ENCODE measurements at regions of chr2 and their contacts with region 1.

Region 1: DNA sequence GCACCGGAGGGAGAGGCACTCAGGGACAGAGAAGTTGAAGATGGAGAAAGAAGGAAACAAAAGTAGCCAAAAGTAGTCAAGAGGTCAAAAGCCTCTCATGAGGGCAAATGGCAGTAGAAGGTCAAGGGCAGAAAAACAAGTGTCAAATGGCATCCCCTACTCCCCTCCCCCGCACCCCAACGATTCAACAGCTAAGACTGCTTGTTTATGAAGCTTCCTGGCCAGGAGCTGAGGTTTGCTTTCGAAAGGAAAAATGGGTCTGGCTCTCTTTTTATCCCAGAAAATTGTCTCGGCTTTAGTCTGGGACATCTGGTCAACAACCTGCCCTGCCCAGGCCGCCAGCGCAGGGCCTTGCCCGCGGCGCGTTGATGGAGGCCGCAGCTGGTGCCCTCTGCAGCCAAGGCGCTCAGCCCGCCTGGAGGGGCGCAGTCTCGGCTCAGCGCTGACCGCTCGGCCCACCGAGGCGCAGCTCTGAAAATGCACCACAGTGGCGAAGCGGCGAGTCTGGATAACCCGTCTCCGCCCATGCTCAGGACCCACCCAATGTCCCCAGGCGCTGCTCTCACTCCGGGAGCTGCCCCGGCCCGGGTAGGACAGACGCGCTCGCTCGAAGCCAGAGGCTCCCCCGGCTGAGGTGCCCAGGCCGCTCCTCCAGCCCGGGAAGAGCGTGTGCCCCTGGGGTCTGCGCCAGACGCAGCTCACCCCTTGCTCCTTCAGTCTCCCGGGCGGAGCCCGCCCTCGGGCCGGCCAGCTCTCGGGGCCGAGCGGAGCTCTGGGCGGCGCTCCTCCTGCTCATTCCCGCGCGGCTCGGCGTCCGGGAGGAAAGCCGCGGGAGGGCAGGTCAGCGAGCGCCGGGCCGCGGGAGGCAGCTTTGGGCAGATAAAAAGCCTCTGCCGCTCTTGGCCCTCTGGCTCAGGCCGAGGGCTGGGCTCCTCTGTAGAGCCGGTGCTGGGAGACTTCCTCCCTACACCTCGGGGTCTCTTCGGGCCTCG is 1.8 kb upstream of the TBR1 start:
- DNase-seq: peak; percentile 25
- ATAC-seq: peak; percentile 45
- H3K4me3 Mint-ChIP-seq: peak overlapping the region; percentile 52
- H3K27ac Mint-ChIP-seq: no peak overlapping the region
- H3K4me1 Mint-ChIP-seq: peaks cover 42% of the 10 kb centered on the region
- H3K27me3 Mint-ChIP-seq: peaks cover 48% of the 10 kb centered on the region

Region 2: DNA sequence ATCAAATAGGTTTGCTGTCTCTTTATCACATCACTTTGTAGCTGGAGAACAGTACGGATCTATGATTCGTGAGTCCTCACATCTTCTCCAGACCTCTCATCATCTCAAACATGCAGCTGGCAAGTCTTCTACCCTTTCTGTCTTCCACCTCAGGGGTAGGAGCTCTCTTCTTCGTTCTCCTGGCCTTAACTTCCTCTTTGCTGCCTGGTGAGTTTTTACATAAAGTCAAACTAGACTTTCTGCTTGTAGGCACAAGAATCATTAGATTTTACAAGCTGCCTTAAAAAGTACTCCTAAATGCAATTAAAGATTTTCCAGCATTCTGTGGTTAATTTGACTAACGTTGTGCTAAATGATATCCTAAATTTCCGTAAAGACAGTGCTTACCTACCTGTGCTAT is 297.8 kb before region 1 on chr2:
- CTCF ChIA-PET with region 1: no interaction called
- POLR2A ChIA-PET with region 1: no interaction called
- intact Hi-C with region 1: no loop called
- DNase-seq: no peak
- ATAC-seq: no peak
- H3K4me3 Mint-ChIP-seq: no peak overlapping the region
- H3K27ac Mint-ChIP-seq: no peak overlapping the region
- H3K4me1 Mint-ChIP-seq: no peaks in the 10 kb centered on the region
- H3K27me3 Mint-ChIP-seq: peaks cover 2% of the 10 kb centered on the region

Region 3: GRCh38 chr2:161308178-161308955 is 106.0 kb before region 1 on chr2 and contains the start of gene PSMD14:
- CTCF ChIA-PET with region 1: no interaction called
- POLR2A ChIA-PET with region 1: no interaction called
- intact Hi-C with region 1: loop called in 1 of 2 experiments (anchors 5 kb)
- DNase-seq: peak; percentile 96
- ATAC-seq: peak; percentile 91
- H3K4me3 Mint-ChIP-seq: peak within 1 kb of the TSS; percentile 87
- H3K27ac Mint-ChIP-seq: peak within 1 kb of the TSS; percentile 93
- H3K4me1 Mint-ChIP-seq: peaks cover 28% of the 10 kb centered on the region
- H3K27me3 Mint-ChIP-seq: no peaks in the 10 kb centered on the region
- total RNA-seq, gene PSMD14: 69.5 to 85.7 TPM

Region 4: GRCh38 chr2:161426922-161427663 is 12.8 kb after region 1 on chr2:
- CTCF ChIA-PET with region 1: interaction called, 8 read pairs
- POLR2A ChIA-PET with region 1: interaction called, 8 read pairs
- intact Hi-C with region 1: loop called (anchors 1 kb)
- DNase-seq: peak; percentile 51
- ATAC-seq: peak; percentile 30
- H3K4me3 Mint-ChIP-seq: peak overlapping the region; percentile 51
- H3K27ac Mint-ChIP-seq: peak overlapping the region; percentile 67
- H3K4me1 Mint-ChIP-seq: peaks cover 21% of the 10 kb centered on the region
- H3K27me3 Mint-ChIP-seq: peaks cover 72% of the 10 kb centered on the region

Region 5: GRCh38 chr2:161471631-161472030 is 57.3 kb after region 1 on chr2:
- CTCF ChIA-PET with region 1: no interaction called
- POLR2A ChIA-PET with region 1: no interaction called
- intact Hi-C with region 1: no loop called
- DNase-seq: no peak
- ATAC-seq: no peak
- H3K4me3 Mint-ChIP-seq: no peak overlapping the region
- H3K27ac Mint-ChIP-seq: no peak overlapping the region
- H3K4me1 Mint-ChIP-seq: no peaks in the 10 kb centered on the region
- H3K27me3 Mint-ChIP-seq: peaks cover 24% of the 10 kb centered on the region

Measured in activated CD4-positive, alpha-beta T cell treated with anti-CD3 and anti-CD28 coated beads for 36 hours (primary cell).